ENCODE measurements at regions of chr5 and their contacts with region 1.

Region 1: GRCh38 chr5:40486437-40487275 is 193.1 kb upstream of the PTGER4 start:
- DNase-seq: peak; percentile 85
- H3K4me3 Mint-ChIP-seq: peak overlapping the region; percentile 1
- H3K27ac Mint-ChIP-seq: peak overlapping the region; percentile 92
- H3K4me1 Mint-ChIP-seq: peaks cover 83% of the 10 kb centered on the region
- H3K27me3 Mint-ChIP-seq: no peaks in the 10 kb centered on the region

Region 2: DNA sequence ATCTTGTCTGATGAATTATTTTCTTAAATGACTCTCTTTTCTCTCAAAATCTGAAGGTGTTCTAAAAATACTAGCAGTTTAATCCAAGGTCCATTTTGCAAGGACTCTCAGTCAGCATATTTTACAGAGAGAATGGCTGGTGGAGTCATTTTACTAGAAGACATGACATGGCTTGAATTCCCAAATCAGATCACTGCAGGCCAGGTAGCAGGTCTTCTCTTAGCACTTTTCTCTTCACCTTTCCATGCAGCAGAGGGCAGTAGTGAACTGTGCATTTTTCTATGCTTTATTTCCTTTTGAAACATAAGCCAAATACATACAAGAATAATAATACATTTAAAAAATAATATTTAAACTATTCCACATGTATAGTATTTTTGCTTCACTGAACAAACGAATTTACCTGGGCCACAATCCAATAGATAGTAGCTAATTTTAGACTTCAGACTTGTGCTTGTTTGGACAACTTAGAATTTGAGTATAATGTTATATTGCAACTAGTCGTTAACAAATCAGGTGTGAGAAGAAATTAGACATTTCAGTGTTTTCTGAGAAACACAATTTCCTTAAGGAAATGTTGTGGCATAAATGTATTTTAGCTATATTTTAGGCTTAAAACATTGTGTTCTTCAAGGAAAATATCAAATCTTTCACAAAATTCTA is 772.5 kb before region 1 on chr5:
- CTCF ChIA-PET with region 1: no interaction called
- intact Hi-C with region 1: loop called (anchors 10 kb)
- DNase-seq: peak; percentile 66
- H3K4me3 Mint-ChIP-seq: no peak overlapping the region
- H3K27ac Mint-ChIP-seq: no peak overlapping the region
- H3K4me1 Mint-ChIP-seq: no peaks in the 10 kb centered on the region
- H3K27me3 Mint-ChIP-seq: no peaks in the 10 kb centered on the region

Region 3: GRCh38 chr5:40210694-40211093 is 276.0 kb before region 1 on chr5:
- CTCF ChIA-PET with region 1: no interaction called
- intact Hi-C with region 1: loop called (anchors 1 kb)
- DNase-seq: no peak
- H3K4me3 Mint-ChIP-seq: no peak overlapping the region
- H3K27ac Mint-ChIP-seq: peak overlapping the region; percentile 98
- H3K4me1 Mint-ChIP-seq: peaks cover 63% of the 10 kb centered on the region
- H3K27me3 Mint-ChIP-seq: no peaks in the 10 kb centered on the region

Region 4: GRCh38 chr5:40404613-40405012 is 82.0 kb before region 1 on chr5:
- CTCF ChIA-PET with region 1: interaction called, 5 read pairs
- intact Hi-C with region 1: loop called (anchors 1 kb)
- DNase-seq: no peak
- H3K4me3 Mint-ChIP-seq: peak overlapping the region; percentile 33
- H3K27ac Mint-ChIP-seq: peak overlapping the region; percentile 99
- H3K4me1 Mint-ChIP-seq: peaks cover 89% of the 10 kb centered on the region
- H3K27me3 Mint-ChIP-seq: no peaks in the 10 kb centered on the region

Region 5: GRCh38 chr5:40679155-40679913 is 192.7 kb after region 1 on chr5:
- CTCF ChIA-PET with region 1: interaction called, 4 read pairs
- intact Hi-C with region 1: loop called (anchors 1 kb)
- DNase-seq: peak; percentile 95
- H3K4me3 Mint-ChIP-seq: peak overlapping the region; percentile 89
- H3K27ac Mint-ChIP-seq: peak overlapping the region; percentile 99
- H3K4me1 Mint-ChIP-seq: peaks cover 41% of the 10 kb centered on the region
- H3K27me3 Mint-ChIP-seq: no peaks in the 10 kb centered on the region

Region 6: GRCh38 chr5:40834849-40835787 is 348.5 kb after region 1 on chr5 and contains the start of gene RPL37:
- CTCF ChIA-PET with region 1: no interaction called
- intact Hi-C with region 1: loop called (anchors 5 kb)
- DNase-seq: peak; percentile 96
- H3K4me3 Mint-ChIP-seq: peak within 1 kb of the TSS; percentile 100
- H3K27ac Mint-ChIP-seq: peak within 1 kb of the TSS; percentile 100
- H3K4me1 Mint-ChIP-seq: peaks cover 48% of the 10 kb centered on the region
- H3K27me3 Mint-ChIP-seq: no peaks in the 10 kb centered on the region
- total RNA-seq, gene RPL37: 2,148 to 2,239 TPM

Measured in activated naive CD4-positive, alpha-beta T cell treated with anti-CD3 and anti-CD28 coated beads for 36 hours (primary cell).